ENCODE measurements at regions of chr3 and their contacts with region 1.

Region 1: GRCh38 chr3:50337191-50337841 is 3.3 kb downstream of the RASSF1 start:
- DNase-seq: peak; percentile 97
- H3K4me3 Mint-ChIP-seq: peak overlapping the region; percentile 87
- H3K27ac Mint-ChIP-seq: peak overlapping the region; percentile 95
- H3K4me1 Mint-ChIP-seq: peaks cover 67% of the 10 kb centered on the region
- H3K27me3 Mint-ChIP-seq: no peaks in the 10 kb centered on the region

Region 2: GRCh38 chr3:49984394-49984793 is 352.9 kb before region 1 on chr3:
- CTCF ChIA-PET with region 1: no interaction called
- POLR2A ChIA-PET with region 1: no interaction called
- DNase-seq: no peak
- H3K4me3 Mint-ChIP-seq: no peak overlapping the region
- H3K27ac Mint-ChIP-seq: no peak overlapping the region
- H3K4me1 Mint-ChIP-seq: no peaks in the 10 kb centered on the region
- H3K27me3 Mint-ChIP-seq: no peaks in the 10 kb centered on the region

Region 3: DNA sequence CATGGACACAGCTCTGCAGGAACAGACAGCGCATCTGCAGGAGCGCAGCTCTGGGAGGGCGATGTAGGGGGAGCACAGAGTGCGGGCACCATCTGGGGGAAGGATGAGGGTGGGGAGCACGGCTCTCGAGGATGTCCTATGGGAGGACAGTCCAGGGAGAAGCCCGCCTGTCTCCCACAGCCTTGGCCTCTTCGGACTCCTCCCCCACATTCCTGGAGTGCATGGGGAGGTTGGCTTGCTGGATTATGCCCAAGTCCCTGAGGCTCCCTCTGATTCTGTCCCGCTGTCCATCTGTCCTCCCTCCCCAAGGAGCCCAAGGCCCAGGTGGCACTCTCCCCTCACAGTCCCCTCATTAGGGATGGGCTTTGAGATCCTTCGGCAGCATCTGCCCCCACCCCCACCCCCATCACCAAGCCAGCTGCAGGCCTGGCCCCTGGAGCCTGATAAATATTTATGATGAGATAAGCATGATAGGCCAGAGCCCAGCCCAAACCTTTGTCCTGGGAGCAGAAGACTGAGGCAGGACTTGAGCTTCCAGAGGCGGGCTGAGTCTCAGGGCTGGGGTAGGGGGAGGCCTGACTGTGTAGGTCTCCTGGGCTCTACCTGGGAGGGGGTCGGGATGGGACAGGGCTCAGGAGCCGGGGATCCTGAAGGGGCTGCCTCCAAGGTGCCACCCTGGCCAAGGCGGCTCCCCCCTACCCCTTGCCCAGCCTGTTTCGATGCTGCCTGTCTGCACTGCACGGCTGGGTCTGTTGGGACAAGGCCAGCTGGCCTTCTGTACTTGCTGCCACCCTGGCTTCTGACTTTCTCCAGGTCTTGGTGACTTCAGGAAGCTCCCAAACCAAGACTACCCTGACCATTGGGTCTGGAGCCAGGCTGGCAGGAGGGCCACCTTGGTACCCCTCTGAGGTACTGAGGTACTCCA is 210.8 kb before region 1 on chr3:
- CTCF ChIA-PET with region 1: no interaction called
- POLR2A ChIA-PET with region 1: no interaction called
- DNase-seq: no peak
- H3K4me3 Mint-ChIP-seq: no peak overlapping the region
- H3K27ac Mint-ChIP-seq: no peak overlapping the region
- H3K4me1 Mint-ChIP-seq: no peaks in the 10 kb centered on the region
- H3K27me3 Mint-ChIP-seq: no peaks in the 10 kb centered on the region

Region 4: DNA sequence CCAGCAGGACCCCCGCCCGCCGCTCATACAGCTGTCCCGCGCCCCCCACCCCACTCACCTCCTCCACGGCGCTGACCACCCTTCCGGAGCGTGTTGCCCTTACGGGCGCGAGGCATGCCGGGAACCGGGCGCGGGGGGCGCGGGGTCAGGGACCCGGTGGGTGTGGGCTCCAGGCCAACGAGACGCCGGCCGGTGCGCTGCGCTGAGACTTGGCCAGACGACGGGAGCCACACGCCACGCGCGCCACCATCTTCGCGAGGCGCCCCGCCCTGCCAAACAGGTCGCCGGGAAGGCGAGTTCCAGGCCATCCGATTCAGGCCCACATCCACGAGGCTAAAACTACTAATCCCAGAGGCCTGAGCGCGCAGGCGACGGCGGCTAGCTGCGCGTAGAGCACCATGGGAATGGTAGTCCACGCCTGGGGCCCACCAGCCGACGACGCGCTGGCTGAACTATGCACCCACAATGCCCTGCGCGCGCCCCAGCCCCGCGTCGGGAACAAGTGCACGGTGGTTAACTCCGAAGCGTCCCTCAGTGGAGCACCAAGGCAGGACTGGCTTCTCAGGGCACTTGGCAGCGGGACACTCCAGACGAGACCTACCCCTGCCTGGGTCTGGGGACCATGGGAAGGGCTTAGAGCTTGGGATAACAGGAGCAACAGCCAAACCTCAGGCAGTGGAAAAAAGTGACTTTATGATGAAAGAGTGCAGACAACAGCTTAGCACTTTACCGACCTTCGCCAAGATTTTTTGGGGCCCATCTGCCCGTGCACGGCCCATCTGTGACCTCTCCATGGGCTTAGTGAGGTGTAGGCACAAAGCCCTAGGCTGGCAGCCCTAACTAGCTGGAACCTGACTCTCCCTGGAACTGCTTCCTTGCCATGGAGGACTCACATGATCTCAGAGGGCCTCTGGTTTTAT is 44.9 kb before region 1 on chr3 and contains the start of gene IFRD2:
- CTCF ChIA-PET with region 1: interaction called, 21 read pairs
- POLR2A ChIA-PET with region 1: no interaction called
- DNase-seq: peak; percentile 98
- H3K4me3 Mint-ChIP-seq: peak within 1 kb of the TSS; percentile 88
- H3K27ac Mint-ChIP-seq: peak within 1 kb of the TSS; percentile 95
- H3K4me1 Mint-ChIP-seq: peaks cover 27% of the 10 kb centered on the region
- H3K27me3 Mint-ChIP-seq: no peaks in the 10 kb centered on the region
- total RNA-seq, gene IFRD2: 59.4 to 66.0 TPM

Region 5: DNA sequence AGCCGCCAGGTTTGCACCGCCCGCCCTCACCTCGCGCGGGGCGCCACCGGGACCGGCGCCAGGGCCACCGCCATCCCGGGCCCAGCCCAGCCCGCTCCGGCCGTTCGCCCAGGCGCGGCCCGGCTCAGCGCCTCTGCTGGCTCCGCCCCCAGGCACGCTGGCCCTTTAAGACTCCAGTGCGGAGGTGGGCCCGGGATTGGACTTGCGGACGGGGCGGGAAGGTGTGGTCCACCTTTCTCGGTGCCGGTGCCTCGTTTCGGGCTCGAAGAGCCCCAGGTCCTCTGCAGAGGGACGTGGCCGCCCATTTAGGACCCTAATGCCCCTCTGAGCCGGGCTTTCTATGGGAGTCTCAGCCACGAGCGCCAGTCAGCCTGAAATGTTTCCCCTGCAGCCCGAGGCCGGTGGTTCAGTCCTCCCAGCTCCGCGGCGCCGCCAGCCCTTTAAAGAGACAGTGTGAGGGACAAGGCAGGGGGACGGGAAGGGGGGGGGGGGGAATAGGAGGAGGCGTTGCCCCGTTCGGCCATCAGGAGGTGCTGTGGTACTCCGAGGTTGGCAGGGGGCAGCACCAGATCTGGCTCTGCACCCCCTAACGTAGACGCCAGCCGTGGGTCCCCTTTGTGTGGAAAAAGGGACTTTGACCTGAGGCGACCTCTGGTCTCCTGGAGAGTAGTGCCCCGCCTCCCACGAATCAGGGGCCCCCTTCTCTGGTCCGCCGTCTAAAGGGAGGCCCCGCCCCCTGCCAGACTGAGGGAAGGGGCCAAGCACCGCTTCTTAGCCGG is 15.8 kb before region 1 on chr3:
- CTCF ChIA-PET with region 1: interaction called, 52 read pairs
- POLR2A ChIA-PET with region 1: no interaction called
- DNase-seq: peak; percentile 86
- H3K4me3 Mint-ChIP-seq: peak overlapping the region; percentile 75
- H3K27ac Mint-ChIP-seq: peak overlapping the region; percentile 97
- H3K4me1 Mint-ChIP-seq: peaks cover 40% of the 10 kb centered on the region
- H3K27me3 Mint-ChIP-seq: no peaks in the 10 kb centered on the region

Region 6: GRCh38 chr3:50350527-50351322 is 13.4 kb after region 1 on chr3 and contains the starts of genes CYB561D2 and NPRL2:
- CTCF ChIA-PET with region 1: interaction called, 76 read pairs
- POLR2A ChIA-PET with region 1: interaction called, 11 read pairs
- DNase-seq: peak; percentile 99
- H3K4me3 Mint-ChIP-seq: peak within 1 kb of the TSS; percentile 94
- H3K27ac Mint-ChIP-seq: peak within 1 kb of the TSS; percentile 98
- H3K4me1 Mint-ChIP-seq: peaks cover 60% of the 10 kb centered on the region
- H3K27me3 Mint-ChIP-seq: no peaks in the 10 kb centered on the region
- total RNA-seq, gene CYB561D2: 35.3 to 40.9 TPM
- total RNA-seq, gene NPRL2: 40.8 to 46.5 TPM

Region 7: DNA sequence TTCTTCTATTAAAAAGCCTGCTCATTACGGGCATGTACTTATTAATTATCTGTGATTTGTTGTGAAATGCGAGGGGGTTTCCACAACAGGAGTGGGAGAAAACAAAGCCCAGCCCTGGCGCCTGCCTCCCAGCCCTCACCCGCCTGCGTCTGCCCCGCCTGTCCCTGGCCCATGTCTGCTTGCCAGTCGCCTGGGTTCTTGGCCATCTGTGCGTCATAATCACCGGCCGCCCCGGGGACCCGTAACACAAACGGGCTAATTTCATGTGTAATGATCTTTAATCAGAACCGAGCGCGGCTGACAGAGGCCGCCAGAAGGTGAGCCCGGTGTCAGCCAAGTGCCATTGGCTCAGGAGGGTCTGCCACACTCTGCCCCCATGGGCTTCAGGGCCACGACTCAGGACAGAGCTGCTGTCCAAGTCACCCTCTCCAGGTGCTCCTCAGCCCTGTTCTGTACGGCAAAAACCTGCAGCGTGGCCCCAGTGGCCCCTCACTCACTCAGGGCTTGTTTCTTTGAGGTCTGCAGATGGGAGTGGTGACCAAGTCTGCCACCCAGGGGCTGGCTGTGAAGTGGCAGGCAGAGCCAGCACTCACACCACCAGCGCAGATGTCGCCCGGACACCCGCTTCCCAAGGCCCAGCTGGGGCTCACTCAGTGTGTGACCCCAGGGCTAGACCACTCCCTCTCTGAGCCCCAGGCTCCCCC is 50.9 kb after region 1 on chr3:
- CTCF ChIA-PET with region 1: no interaction called
- POLR2A ChIA-PET with region 1: no interaction called
- DNase-seq: no peak
- H3K4me3 Mint-ChIP-seq: no peak overlapping the region
- H3K27ac Mint-ChIP-seq: no peak overlapping the region
- H3K4me1 Mint-ChIP-seq: peaks cover 4% of the 10 kb centered on the region
- H3K27me3 Mint-ChIP-seq: no peaks in the 10 kb centered on the region